Ovary (tissue), 10 donors: ENCODE measurements at regions of chr19 and their contacts with region 1.

Region 1: DNA sequence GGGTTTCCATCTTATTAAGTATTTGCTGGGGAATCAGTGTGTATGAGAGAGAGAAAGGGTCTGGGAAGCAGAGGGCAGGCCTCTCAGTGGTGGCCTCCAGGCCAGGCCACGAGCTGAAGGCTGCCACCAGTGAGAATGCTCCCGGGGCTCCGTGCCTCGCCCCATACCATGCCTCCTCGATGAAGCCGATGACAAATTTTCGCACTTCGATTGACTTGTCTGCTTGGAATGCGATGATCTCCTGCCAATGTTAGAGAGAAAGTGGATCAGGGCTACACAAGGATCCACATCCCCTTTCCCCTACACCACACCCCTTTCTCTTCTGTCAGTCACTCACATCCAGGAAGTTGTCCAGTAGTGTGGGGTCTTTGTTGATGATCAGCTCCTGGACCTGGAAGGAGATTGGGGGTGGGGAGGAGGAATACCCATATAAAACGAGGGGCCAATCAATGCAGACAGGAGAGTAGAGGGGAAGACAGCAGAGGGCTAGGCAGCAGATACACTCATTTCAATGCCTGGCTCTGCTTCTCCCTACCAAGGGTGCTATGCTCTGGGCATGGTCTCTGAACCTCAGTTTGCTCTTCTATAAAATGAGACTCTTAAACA is 10.7 kb downstream of the SYMPK start:
- DNase-seq: no peak
- H3K4me3 ChIP-seq: no peak overlapping the region
- H3K27ac ChIP-seq: no peak overlapping the region
- H3K4me1 ChIP-seq: no peaks in the 10 kb centered on the region
- H3K27me3 ChIP-seq: no peaks in the 10 kb centered on the region
- CTCF ChIP-seq: no peak
- EP300 ChIP-seq: no peak
- POLR2A ChIP-seq: no peak

Region 2: GRCh38 chr19:45902651-45903625 is 50.7 kb after region 1 on chr19:
- intact Hi-C with region 1: no loop called
- DNase-seq: peak; percentile 98 to 100 (median 99)
- H3K4me3 ChIP-seq: peak overlapping the region; percentile 62
- H3K27ac ChIP-seq: peak overlapping the region in 1 of 2 donors; percentile 56
- H3K4me1 ChIP-seq: peaks cover 5% of the 10 kb centered on the region
- H3K27me3 ChIP-seq: no peaks in the 10 kb centered on the region
- CTCF ChIP-seq: no peak
- EP300 ChIP-seq: no peak
- POLR2A ChIP-seq: peak; percentile 46

Region 3: DNA sequence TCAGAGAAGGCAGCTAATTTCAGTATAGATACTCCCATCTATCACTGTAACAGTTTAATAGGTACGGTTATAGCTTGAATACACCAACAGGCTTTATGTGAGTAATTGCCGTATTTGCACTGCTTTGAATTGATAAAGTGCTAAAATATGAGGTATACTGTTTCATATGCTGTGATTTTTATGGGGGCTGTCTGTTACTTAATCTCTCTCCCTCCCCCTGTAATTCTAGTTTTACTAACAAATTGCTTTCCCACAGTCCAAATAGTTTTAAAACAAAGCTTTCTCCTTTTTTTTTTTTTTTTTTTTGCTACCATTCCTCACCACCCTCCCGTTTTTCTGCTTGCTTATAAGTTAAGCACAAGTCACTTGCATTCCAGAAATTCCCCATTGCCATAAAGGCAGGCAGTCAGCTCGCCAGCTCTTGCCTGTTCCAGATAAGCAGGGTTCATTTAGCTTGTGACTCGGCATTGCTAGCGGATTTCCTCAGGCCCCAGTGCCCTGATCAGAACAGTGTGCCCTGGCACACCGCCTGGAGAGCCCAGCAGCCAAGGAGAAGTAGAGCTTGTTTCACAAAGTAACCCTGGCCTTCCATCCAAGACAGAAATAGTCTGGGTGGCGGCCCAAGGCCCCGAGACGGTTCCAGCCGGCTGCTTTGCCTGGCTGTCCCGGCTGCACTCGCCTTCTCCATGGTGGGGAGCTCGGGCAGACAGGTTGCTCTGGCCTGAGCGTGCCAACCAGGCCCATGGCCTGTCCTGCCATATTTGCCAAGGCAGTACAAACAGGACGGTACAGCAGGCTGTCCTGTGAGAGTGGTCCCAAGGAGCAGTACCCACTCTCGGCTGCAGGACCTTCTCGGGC is 1123.9 kb after region 1 on chr19:
- intact Hi-C with region 1: loop called in 1 of 4 experiments (anchors 10 kb)
- DNase-seq: peak; percentile 89 to 96 (median 92)
- H3K4me3 ChIP-seq: no peak overlapping the region
- H3K27ac ChIP-seq: peak overlapping the region in 1 of 2 donors; percentile 36
- H3K4me1 ChIP-seq: peaks cover 24% of the 10 kb centered on the region
- H3K27me3 ChIP-seq: no peaks in the 10 kb centered on the region
- CTCF ChIP-seq: no peak
- EP300 ChIP-seq: no peak
- POLR2A ChIP-seq: no peak

Region 4: GRCh38 chr19:47035127-47036096 is 1183.2 kb after region 1 on chr19:
- intact Hi-C with region 1: no loop called
- DNase-seq: peak; percentile 77 to 94 (median 87)
- H3K4me3 ChIP-seq: peak overlapping the region; percentile 29
- H3K27ac ChIP-seq: no peak overlapping the region
- H3K4me1 ChIP-seq: peaks cover 2% of the 10 kb centered on the region
- H3K27me3 ChIP-seq: no peaks in the 10 kb centered on the region
- CTCF ChIP-seq: peak; percentile 74 to 94 (median 88)
- EP300 ChIP-seq: no peak
- POLR2A ChIP-seq: no peak